Colonic mucosa (tissue), 4 donors: ENCODE measurements at regions of chr9 and their contacts with region 1.

Region 1: DNA sequence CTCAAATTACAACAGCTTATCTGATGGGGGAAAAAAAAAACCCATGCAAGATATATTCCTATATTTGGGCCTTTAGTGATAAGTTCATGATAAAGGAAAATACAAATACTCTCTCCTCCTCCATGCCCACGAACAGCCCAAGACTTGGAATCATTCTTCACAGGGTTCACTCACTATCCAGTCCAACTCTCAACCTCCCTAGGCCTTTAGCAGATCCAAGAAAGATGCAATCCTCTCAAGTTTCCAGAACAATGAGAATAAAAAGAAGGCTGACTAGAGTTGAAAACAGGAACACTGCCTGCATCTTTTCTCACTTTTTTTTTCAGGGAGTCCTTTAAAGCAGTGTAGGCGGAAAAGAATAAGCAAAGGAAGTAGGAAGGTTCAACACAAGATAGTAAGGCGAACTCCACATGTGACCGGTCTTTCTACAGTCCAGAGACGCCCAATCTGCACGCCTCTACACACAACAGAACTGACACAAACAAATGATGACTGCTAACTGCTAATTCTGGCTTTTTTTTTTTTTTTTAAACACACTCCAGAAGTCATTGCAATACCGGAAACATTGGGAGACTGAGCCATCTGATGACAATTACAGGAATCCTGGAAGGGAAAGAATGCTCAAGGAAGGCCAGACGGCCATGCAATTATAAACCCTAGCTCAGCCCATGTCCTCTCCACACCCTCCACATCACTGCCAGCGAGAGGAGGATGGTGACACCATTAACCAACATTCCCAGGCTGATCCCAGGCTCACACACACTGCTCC is 75.4 kb downstream of the BNC2 start:
- DNase-seq: no peak
- H3K4me3 ChIP-seq: no peak overlapping the region
- H3K27ac ChIP-seq: peak overlapping the region; percentile 32
- H3K4me1 ChIP-seq: no peaks in the 10 kb centered on the region
- H3K27me3 ChIP-seq: no peaks in the 10 kb centered on the region
- CTCF ChIP-seq: no peak

Region 2: GRCh38 chr9:16869882-16870595 is 75.0 kb after region 1 on chr9:
- intact Hi-C with region 1: loop called (anchors 10 kb)
- DNase-seq: no peak
- H3K4me3 ChIP-seq: peak overlapping the region; percentile 49
- H3K27ac ChIP-seq: peak overlapping the region; percentile 53
- H3K4me1 ChIP-seq: no peaks in the 10 kb centered on the region
- H3K27me3 ChIP-seq: no peaks in the 10 kb centered on the region
- CTCF ChIP-seq: no peak